ENCODE measurements at regions of chr14 and their contacts with region 1.

Region 1: GRCh38 chr14:89178802-89179535 is 238.1 kb downstream of the FOXN3 start:
- DNase-seq: no peak
- H3K4me3 ChIP-seq: no peak overlapping the region
- H3K27ac ChIP-seq: no peak overlapping the region
- H3K4me1 ChIP-seq: peaks cover 0 to 11% (median 5%) of the 10 kb centered on the region in 4 experiments
- H3K27me3 ChIP-seq: no peaks in the 10 kb centered on the region

Region 2: DNA sequence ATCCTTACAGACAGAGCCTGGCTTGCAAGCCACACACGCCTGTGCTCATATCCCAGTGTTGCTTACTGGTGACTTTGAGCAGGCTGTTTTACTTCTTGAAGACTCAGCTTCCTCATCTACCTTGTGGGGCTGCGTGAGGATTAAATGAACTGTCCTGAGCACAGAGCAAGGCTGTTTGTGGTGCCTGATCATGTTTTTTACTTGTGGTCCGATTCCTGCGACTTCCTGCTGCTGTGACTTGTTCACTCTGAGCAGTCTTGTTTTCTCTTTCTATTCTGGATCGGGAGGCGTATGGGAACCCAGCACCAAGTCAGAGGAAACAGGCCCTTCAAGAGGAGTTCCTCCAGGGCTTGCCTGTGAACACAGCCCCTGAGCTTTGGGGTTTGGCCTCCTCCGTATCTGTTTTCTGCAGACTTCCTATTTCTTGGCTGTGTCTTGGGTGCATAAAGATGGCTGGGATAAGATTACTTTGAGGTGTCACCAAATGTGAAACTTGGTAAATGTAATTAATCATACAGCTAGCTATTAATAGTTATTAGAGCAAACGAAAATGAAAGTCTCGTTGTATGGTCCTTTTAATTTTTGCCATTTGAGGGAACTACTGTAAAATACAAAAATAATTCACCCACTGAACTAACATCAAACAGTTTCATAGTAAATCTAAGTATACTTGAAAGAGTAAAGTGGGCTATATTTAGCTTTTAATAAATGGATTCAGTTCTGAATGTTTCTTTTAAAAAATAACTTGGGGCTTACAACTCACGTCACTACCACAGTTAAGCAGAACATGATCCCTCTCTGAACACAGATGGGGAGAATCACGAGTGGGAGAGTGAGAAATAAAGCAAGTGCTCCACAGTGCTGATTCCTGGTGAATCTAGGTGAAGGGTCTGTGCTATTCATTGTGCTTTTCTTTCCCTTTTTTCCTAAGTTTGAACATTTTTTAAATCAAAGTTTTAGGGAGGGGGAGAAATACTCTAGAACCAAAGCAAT is 13.5 kb before region 1 on chr14:
- CTCF ChIA-PET with region 1: interaction called, 22 read pairs
- POLR2A ChIA-PET with region 1: interaction called, 4 read pairs
- DNase-seq: peak; percentile 99 to 100 (median 100)
- H3K4me3 ChIP-seq: peak overlapping the region in 6 of 7 experiments; percentile 46 to 76 (median 58)
- H3K27ac ChIP-seq: peak overlapping the region; percentile 89 to 91
- H3K4me1 ChIP-seq: peaks cover 22 to 55% (median 50%) of the 10 kb centered on the region in 4 experiments
- H3K27me3 ChIP-seq: no peaks in the 10 kb centered on the region

Region 3: GRCh38 chr14:89198544-89199329 is 19.8 kb after region 1 on chr14:
- CTCF ChIA-PET with region 1: interaction called, 10 read pairs
- POLR2A ChIA-PET with region 1: no interaction called
- DNase-seq: no peak
- H3K4me3 ChIP-seq: no peak overlapping the region
- H3K27ac ChIP-seq: no peak overlapping the region
- H3K4me1 ChIP-seq: peaks cover 0 to 25% (median 19%) of the 10 kb centered on the region in 4 experiments
- H3K27me3 ChIP-seq: no peaks in the 10 kb centered on the region

Region 4: GRCh38 chr14:89214221-89214936 is 35.4 kb after region 1 on chr14:
- CTCF ChIA-PET with region 1: interaction called, 18 read pairs
- POLR2A ChIA-PET with region 1: no interaction called
- DNase-seq: peak in 2 of 3 donors; percentile 40 to 52
- H3K4me3 ChIP-seq: peak overlapping the region in 1 of 7 experiments; percentile 10
- H3K27ac ChIP-seq: peak overlapping the region in 1 of 2 experiments; percentile 43
- H3K4me1 ChIP-seq: peaks cover 2 to 48% (median 17%) of the 10 kb centered on the region in 4 experiments
- H3K27me3 ChIP-seq: no peaks in the 10 kb centered on the region

Region 5: DNA sequence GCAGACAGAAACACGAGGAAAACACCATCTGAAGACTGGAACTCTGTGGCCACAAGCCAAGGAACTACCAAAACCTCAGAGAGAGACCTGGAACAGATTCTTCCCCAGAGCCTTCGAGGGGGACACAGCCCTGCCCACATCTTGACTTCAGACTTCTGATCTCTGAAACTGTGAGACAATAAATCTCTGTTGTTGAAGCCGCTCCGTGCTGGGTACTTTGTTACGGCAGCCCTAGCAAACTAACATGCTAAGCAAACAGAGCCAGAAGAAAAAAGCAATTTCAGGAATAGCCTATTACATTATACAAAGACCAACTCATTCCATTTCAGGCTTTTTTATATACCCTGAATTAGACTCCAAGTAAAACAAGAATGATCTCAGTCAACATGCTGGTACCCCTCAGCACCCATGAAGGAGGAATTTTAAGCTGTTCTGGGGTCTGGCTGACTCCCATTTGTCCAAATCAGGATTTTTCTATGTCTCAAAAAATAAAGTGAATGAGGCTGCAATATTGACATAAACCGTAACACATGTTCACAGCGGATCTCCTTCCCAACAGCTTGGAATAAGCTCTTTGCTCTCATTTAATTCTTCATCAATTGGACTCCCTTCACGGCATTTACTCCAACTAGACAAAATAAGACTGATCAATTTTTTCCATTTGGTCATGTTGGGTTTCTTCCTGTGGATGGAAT is 48.0 kb after region 1 on chr14:
- CTCF ChIA-PET with region 1: no interaction called
- POLR2A ChIA-PET with region 1: no interaction called
- DNase-seq: no peak
- H3K4me3 ChIP-seq: no peak overlapping the region
- H3K27ac ChIP-seq: no peak overlapping the region
- H3K4me1 ChIP-seq: peaks cover 0 to 8% (median 4%) of the 10 kb centered on the region in 4 experiments
- H3K27me3 ChIP-seq: no peaks in the 10 kb centered on the region

Region 6: DNA sequence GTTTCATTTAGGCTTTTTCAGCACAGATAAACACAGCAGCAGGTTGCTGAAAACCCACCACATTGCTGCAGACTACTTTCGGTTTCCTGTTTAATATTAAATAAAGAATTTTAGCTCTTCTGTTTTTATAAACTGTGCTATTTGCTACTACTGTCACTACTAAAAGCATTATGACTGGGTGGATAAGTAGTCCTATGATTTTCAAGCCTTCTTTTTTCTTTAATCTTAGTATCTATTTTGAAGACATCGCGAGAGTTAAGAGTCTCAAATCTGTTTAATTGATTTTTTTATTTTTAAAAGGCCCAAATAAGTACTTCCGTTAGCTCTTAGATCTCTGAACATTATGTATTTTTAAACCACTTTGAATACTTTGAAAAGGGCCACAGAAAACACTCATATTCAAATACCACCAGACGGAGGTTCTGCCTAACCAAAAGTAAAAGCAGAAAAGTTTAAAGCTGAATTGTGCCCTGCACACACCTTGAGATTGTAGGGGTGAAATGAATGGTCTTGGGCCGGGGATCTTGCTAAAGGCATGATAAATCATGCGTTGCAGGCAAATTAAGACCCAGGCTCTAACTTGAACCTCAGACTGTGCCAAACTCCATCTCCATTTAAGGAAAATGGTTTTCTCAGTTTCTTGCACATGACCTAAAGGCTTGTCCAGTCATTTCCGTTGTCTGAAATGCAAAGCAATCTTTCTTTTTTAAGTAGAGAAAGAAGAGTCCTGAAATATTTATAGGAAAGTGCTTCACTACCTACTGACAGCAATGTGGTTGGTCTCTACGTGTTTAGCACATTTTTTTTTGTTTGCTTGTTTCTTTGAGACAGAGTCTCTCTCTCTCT is 251.6 kb after region 1 on chr14:
- CTCF ChIA-PET with region 1: no interaction called
- POLR2A ChIA-PET with region 1: no interaction called
- DNase-seq: peak; percentile 49 to 83 (median 75)
- H3K4me3 ChIP-seq: peak overlapping the region in 6 of 7 experiments; percentile 40 to 74 (median 54)
- H3K27ac ChIP-seq: peak overlapping the region; percentile 76 to 83
- H3K4me1 ChIP-seq: peaks cover 17 to 39% (median 33%) of the 10 kb centered on the region in 4 experiments
- H3K27me3 ChIP-seq: no peaks in the 10 kb centered on the region

Region 7: GRCh38 chr14:89466484-89466883 is 287.5 kb after region 1 on chr14:
- CTCF ChIA-PET with region 1: no interaction called
- POLR2A ChIA-PET with region 1: no interaction called
- DNase-seq: peak in 1 of 3 donors; percentile 56
- H3K4me3 ChIP-seq: no peak overlapping the region
- H3K27ac ChIP-seq: no peak overlapping the region
- H3K4me1 ChIP-seq: peaks cover 4 to 23% (median 16%) of the 10 kb centered on the region in 4 experiments
- H3K27me3 ChIP-seq: no peaks in the 10 kb centered on the region